ENCODE measurements at regions of chr1 and their contacts with region 1.

Region 1: GRCh38 chr1:202046227-202046801 is 35.9 kb downstream of the ELF3 start:
- DNase-seq: peak; percentile 98
- H3K4me3 Mint-ChIP-seq: peak overlapping the region; percentile 57
- H3K27ac Mint-ChIP-seq: peak overlapping the region; percentile 99
- H3K4me1 Mint-ChIP-seq: peaks cover 83% of the 10 kb centered on the region
- H3K27me3 Mint-ChIP-seq: no peaks in the 10 kb centered on the region
- CTCF ChIP-seq: no peak

Region 2: DNA sequence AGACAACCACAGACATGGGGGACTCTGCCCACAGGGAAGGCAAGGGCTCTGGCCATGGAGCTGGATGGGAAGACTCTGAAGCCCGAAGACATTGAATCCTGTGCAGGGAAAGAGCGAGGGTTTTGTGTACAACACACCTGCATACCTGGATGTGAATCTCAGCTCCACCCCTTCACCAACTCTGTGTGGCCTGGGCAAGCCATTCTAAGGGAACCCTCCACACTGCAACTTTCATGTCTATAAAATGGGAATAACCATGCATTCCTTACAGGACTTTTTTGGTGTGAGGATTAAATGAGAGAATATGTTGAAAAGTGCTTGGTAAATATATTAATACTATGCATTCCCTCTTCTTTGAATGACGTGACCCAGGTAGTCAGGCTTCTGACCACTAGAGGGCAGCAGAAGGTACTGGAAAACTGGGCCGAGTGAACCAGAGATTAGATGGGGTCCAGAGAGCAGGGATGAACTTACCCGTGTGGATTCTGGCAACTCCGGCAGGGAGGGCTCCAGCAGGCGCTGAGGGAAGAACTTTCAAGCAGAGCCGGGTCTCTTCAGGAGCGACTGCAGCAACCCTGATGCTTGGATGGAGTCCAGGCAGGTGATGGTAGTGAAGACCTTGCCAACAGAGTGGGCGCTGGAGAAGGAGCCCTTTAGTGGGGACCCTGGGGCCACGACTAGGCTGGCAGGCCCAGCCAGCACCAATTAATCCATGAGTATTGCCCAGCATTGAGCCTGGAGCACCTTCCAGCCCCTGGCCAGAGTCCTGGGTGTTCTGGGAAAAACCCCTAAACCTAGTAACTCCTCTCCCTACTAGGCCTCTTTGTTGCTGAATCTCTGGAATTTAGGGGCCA is 36.8 kb before region 1 on chr1:
- CTCF ChIA-PET with region 1: interaction called, 9 read pairs
- intact Hi-C with region 1: loop called (anchors 2 kb)
- DNase-seq: peak; percentile 91
- H3K4me3 Mint-ChIP-seq: peak overlapping the region; percentile 92
- H3K27ac Mint-ChIP-seq: peak overlapping the region; percentile 89
- H3K4me1 Mint-ChIP-seq: peaks cover 48% of the 10 kb centered on the region
- H3K27me3 Mint-ChIP-seq: no peaks in the 10 kb centered on the region
- CTCF ChIP-seq: peak; percentile 85

Region 3: GRCh38 chr1:202034683-202035462 is 11.4 kb before region 1 on chr1:
- CTCF ChIA-PET with region 1: interaction called, 17 read pairs
- intact Hi-C with region 1: no loop called
- DNase-seq: peak; percentile 99
- H3K4me3 Mint-ChIP-seq: peak overlapping the region; percentile 46
- H3K27ac Mint-ChIP-seq: peak overlapping the region; percentile 97
- H3K4me1 Mint-ChIP-seq: peaks cover 75% of the 10 kb centered on the region
- H3K27me3 Mint-ChIP-seq: no peaks in the 10 kb centered on the region
- CTCF ChIP-seq: no peak

Region 4: GRCh38 chr1:202085682-202086404 is 39.5 kb after region 1 on chr1:
- CTCF ChIA-PET with region 1: interaction called, 9 read pairs
- intact Hi-C with region 1: loop called (anchors 2 kb)
- DNase-seq: peak; percentile 73
- H3K4me3 Mint-ChIP-seq: peak overlapping the region; percentile 67
- H3K27ac Mint-ChIP-seq: peak overlapping the region; percentile 99
- H3K4me1 Mint-ChIP-seq: peaks cover 61% of the 10 kb centered on the region
- H3K27me3 Mint-ChIP-seq: no peaks in the 10 kb centered on the region
- CTCF ChIP-seq: no peak

Region 5: GRCh38 chr1:202105539-202106276 is 59.4 kb after region 1 on chr1:
- CTCF ChIA-PET with region 1: interaction called, 10 read pairs
- intact Hi-C with region 1: loop called (anchors 2 kb)
- DNase-seq: peak; percentile 96
- H3K4me3 Mint-ChIP-seq: peak overlapping the region; percentile 31
- H3K27ac Mint-ChIP-seq: peak overlapping the region; percentile 87
- H3K4me1 Mint-ChIP-seq: peaks cover 71% of the 10 kb centered on the region
- H3K27me3 Mint-ChIP-seq: no peaks in the 10 kb centered on the region
- CTCF ChIP-seq: no peak

Measured in Calu3 (cell line).